ENCODE measurements at regions of chr12 and their contacts with region 1.

Region 1: GRCh38 chr12:14769969-14770495 is 33.2 kb downstream of the WBP11 start:
- DNase-seq: peak; percentile 69 to 92
- ATAC-seq: peak; percentile 65 to 72
- H3K4me3 ChIP-seq: peak overlapping the region; percentile 79
- H3K27ac ChIP-seq: peak overlapping the region; percentile 88 to 97
- H3K4me1 ChIP-seq: peaks cover 18% of the 10 kb centered on the region
- CTCF ChIP-seq: peak; percentile 58
- EP300 ChIP-seq: no peak
- POLR2A ChIP-seq: peak; percentile 84; the same call in 1 of the 2 replicates
- RAD21 ChIP-seq: peak; percentile 31 to 33; a peak in 4 of 5 replicates

Region 2: DNA sequence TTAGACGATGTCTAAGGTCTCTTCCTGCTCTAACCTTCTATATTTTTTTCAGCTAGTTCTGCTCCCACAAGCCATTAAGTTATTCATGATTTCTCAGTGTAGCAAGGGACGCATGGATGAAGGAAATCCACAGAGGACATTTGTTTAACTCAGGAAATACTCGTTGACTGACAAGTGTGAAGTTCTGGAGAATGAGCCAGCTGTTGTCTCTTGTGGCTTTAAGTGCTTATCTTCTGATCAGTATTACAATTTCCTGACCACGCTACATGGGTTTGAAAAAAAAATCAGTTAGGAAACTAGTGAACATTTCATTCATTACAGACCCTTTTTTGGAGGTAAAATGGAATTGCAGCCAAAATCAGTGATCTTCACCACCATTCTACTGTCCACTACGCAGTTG is 126.8 kb before region 1 on chr12:
- CTCF ChIA-PET with region 1: no interaction called
- POLR2A ChIA-PET with region 1: no interaction called
- DNase-seq: no peak
- ATAC-seq: no peak
- H3K4me3 ChIP-seq: no peak overlapping the region
- H3K27ac ChIP-seq: no peak overlapping the region
- H3K4me1 ChIP-seq: no peaks in the 10 kb centered on the region
- CTCF ChIP-seq: no peak
- EP300 ChIP-seq: no peak
- POLR2A ChIP-seq: no peak
- RAD21 ChIP-seq: no peak

Region 3: GRCh38 chr12:14756334-14757143 is 13.5 kb before region 1 on chr12:
- CTCF ChIA-PET with region 1: interaction called, 18 read pairs
- POLR2A ChIA-PET with region 1: interaction called, 8 read pairs
- DNase-seq: peak in 1 of 2 experiments; percentile 33
- ATAC-seq: peak; percentile 39 to 58; a peak in 4 of 6 replicates
- H3K4me3 ChIP-seq: no peak overlapping the region
- H3K27ac ChIP-seq: no peak overlapping the region
- H3K4me1 ChIP-seq: no peaks in the 10 kb centered on the region
- CTCF ChIP-seq: peak; percentile 28; the same call in 1 of the 3 replicates
- EP300 ChIP-seq: no peak
- POLR2A ChIP-seq: no peak
- RAD21 ChIP-seq: no peak

Region 4: DNA sequence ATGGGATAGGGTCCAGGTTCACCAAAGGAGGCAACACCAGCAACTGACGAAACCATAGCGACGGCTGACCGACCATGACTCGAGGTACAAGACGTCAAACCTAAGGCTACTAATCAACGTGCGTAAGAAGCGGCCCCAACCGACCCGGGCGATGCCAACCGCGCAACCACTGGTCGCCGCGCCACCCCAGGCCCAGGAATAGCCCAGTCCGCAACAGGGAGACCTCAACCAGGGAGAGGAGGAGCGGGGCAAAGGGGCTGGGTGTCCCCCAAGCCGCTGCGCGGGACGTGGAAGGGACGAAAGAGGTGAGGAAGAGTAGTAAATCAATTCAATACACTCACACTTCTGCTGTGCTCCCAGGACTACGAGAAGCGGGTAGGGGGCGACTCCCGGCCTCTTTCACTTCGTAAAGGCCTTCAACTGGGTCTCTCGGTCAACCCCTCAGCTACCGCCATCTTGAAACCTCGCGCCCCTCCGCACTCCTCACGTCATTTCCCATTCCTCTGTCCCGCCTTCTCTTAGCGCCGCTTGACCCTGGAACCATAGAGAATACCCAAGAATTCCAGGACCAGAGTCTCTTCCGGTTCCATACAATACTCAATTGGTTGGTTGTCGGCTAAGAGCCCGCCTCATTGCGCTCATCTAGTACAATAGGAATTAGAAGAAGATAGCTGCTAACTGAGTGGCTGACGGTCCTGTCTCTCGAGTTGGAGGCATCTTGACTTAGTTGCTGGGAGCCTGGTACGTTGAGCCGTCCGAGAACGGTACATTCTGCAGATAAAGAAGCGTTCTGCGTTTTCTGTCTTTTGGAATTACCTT is 33.2 kb after region 1 on chr12 and contains the starts of genes C12orf60 and WBP11:
- CTCF ChIA-PET with region 1: interaction called, 7 read pairs
- POLR2A ChIA-PET with region 1: interaction called, 68 read pairs
- DNase-seq: peak; percentile 99
- ATAC-seq: peak; percentile 100
- H3K4me3 ChIP-seq: peak within 1 kb of the TSS; percentile 91
- H3K27ac ChIP-seq: peak within 1 kb of the TSS; percentile 89 to 95
- H3K4me1 ChIP-seq: peaks cover 25% of the 10 kb centered on the region
- CTCF ChIP-seq: no peak
- EP300 ChIP-seq: no peak
- POLR2A ChIP-seq: peak; percentile 80
- RAD21 ChIP-seq: no peak
- polyA plus RNA-seq, gene C12orf60: 4.8 and 5.5 TPM in 2 replicates
- polyA plus RNA-seq, gene WBP11: 32.1 and 50.3 TPM in 2 replicates

Region 5: GRCh38 chr12:14836302-14837210 is 66.5 kb after region 1 on chr12:
- CTCF ChIA-PET with region 1: interaction called, 6 read pairs
- POLR2A ChIA-PET with region 1: interaction called, 20 read pairs
- DNase-seq: peak; percentile 50 to 86
- ATAC-seq: peak; percentile 96 to 98
- H3K4me3 ChIP-seq: peak overlapping the region; percentile 17; the same call in 2 of the 3 replicates
- H3K27ac ChIP-seq: peak overlapping the region; percentile 80 to 90
- H3K4me1 ChIP-seq: peaks cover 59% of the 10 kb centered on the region
- CTCF ChIP-seq: no peak
- EP300 ChIP-seq: peak; percentile 57 to 73; a peak in 3 of 5 replicates
- POLR2A ChIP-seq: no peak
- RAD21 ChIP-seq: peak in 1 of 2 experiments; percentile 20; a peak in 3 of 5 replicates